Lower lobe of right lung (tissue), 2 donors: ENCODE measurements at regions of chr9 and their contacts with region 1.

Region 1: DNA sequence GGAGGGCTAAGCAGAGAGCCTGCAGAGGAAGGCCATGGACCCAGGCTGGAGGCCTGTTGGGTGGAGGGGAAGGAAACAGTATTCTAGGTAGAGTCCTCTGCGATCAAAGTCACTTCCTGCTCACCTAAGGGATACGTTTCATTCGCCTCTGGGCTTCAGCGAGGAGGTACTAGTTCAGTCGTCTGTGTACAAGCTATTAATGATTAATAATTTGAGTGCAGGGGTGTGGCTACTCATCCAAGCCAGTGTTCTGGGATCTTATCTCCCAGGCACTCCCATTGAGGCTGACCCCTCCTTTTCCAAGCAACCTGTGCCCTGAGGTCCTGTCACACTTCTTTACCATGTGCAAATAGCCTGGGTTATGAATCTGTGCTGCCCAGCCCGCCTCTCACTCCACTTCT is 25.2 kb downstream of the RALGPS1 start:
- DNase-seq: peak; percentile 58
- ATAC-seq: peak; percentile 91 to 95
- H3K4me3 ChIP-seq: no peak overlapping the region
- H3K27ac ChIP-seq: peak overlapping the region; percentile 49
- H3K4me1 ChIP-seq: peaks cover 17% of the 10 kb centered on the region
- H3K27me3 ChIP-seq: no peaks in the 10 kb centered on the region
- CTCF ChIP-seq: no peak

Region 2: DNA sequence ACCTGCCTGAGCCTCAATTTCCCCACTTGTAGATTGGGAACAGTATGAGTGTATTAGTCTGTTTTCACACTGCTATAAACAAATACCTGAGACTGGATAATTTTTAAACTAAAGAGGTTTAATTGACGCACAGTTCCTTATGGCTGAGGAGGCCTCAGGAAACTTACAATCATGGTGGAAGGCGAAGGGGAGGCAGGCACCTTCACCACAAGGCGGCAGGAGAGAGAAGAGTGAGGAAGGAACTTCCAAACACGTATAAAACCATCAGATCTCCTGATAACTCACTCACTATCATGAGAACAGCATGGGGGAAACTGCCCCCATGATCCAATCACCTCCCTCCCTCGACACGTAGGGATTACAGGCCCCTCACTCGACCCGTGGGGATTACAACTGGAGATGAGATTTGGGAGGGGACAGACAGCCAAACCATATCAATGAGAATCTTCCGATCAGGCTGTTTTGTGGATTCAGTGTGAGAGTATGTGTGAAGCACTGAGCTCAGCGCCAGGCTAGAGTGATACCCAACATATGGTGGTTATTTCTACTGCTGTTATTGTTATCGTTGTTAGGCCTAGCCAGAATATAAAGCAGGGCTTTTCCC is 340.7 kb before region 1 on chr9:
- intact Hi-C with region 1: no loop called
- DNase-seq: no peak
- ATAC-seq: no peak
- H3K4me3 ChIP-seq: no peak overlapping the region
- H3K27ac ChIP-seq: no peak overlapping the region
- H3K4me1 ChIP-seq: no peaks in the 10 kb centered on the region
- H3K27me3 ChIP-seq: peaks cover 23% of the 10 kb centered on the region
- CTCF ChIP-seq: no peak

Region 3: GRCh38 chr9:126874546-126875311 is 65.1 kb before region 1 on chr9:
- intact Hi-C with region 1: no loop called
- DNase-seq: no peak
- ATAC-seq: peak in 1 of 2 donors; percentile 54
- H3K4me3 ChIP-seq: no peak overlapping the region
- H3K27ac ChIP-seq: no peak overlapping the region
- H3K4me1 ChIP-seq: peaks cover 4% of the 10 kb centered on the region
- H3K27me3 ChIP-seq: no peaks in the 10 kb centered on the region
- CTCF ChIP-seq: no peak

Region 4: DNA sequence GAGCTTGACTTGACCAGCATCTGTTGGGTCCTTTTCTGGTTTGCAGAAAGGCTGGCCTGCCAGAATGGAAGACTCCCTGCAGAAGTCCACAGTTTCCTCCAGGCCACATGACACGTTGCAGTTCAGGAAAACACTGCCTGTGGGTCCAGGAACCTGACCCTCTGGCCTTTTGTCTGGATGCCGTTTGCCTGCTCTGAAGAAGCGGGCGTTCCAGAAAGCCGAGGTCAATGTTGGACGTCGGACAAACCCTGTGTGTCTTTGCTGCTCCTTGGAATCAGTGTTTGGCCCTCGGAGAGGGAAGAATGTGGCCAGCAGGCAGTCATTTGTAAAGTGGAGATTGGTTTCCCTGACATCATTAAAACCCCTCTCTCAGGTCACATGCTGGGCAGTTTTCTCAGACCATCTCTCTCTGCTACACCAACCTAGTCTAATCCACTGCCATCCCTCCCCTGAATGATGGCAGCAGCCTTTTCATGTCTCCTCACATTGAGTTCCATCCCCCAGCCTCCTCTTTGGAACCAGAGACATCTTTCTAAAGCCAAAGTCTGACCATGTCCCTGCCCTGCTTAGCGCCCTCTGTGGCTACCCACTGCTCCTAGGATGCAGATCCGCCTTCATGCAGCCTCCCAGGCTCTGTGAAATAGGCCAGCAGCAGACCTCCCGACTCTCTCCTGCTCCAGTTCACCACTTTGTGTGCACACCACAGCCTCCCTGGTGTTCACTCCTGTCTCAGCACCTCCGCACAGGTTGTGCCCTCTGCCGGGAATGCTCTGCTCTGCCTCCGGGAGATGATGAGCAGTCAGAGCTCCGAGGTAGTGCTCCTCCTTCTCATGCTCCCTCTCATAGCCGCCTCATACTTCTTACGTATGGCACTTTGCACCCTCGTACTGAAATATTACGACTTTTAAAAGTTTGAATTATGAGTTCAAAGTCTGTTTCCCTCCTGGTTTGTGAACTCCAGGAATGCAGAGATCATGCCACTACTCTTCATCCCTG is 50.3 kb after region 1 on chr9:
- intact Hi-C with region 1: no loop called
- DNase-seq: no peak
- ATAC-seq: peak; percentile 21 to 40
- H3K4me3 ChIP-seq: no peak overlapping the region
- H3K27ac ChIP-seq: peak overlapping the region; percentile 39
- H3K4me1 ChIP-seq: peaks cover 27% of the 10 kb centered on the region
- H3K27me3 ChIP-seq: no peaks in the 10 kb centered on the region
- CTCF ChIP-seq: no peak

Region 5: GRCh38 chr9:127199001-127199791 is 259.4 kb after region 1 on chr9:
- intact Hi-C with region 1: loop called (anchors 5 kb)
- DNase-seq: peak; percentile 74
- ATAC-seq: peak; percentile 81 to 84
- H3K4me3 ChIP-seq: no peak overlapping the region
- H3K27ac ChIP-seq: peak overlapping the region; percentile 18
- H3K4me1 ChIP-seq: peaks cover 22% of the 10 kb centered on the region
- H3K27me3 ChIP-seq: no peaks in the 10 kb centered on the region
- CTCF ChIP-seq: peak; percentile 90